Transverse colon (tissue), 4 donors: ENCODE measurements at regions of chr13 and their contacts with region 1.

Region 1: GRCh38 chr13:52001120-52001731 is 10.0 kb downstream of the ATP7B start:
- DNase-seq: no peak
- H3K4me3 ChIP-seq: no peak overlapping the region
- H3K27ac ChIP-seq: no peak overlapping the region
- H3K4me1 ChIP-seq: peaks cover 3 to 30% (median 16%) of the 10 kb centered on the region in 4 donors
- H3K27me3 ChIP-seq: no peaks in the 10 kb centered on the region
- CTCF ChIP-seq: peak; percentile 58 to 74 (median 70)
- EP300 ChIP-seq: no peak
- POLR2A ChIP-seq: no peak

Region 2: DNA sequence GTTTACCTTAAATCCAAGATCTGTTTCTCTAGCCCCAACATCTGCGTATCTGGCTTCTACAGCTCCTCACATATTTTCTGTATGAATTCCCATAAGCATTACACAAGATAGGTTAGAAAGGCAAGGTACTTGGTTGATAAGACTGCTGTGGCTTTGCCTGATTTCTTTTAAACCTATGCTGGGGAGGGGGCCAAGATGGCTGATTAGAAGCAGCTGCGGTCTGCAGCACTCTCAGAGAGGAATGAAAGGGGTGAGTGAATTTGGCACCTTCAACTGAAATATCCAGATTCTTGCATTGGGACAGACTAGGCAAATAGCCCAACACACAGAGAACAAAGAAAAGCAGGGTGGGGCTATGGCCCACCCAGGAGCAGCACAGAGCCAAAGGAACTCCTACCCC is 1145.5 kb before region 1 on chr13:
- in situ Hi-C with region 1: no loop called
- intact Hi-C with region 1: no loop called
- DNase-seq: no peak
- H3K4me3 ChIP-seq: no peak overlapping the region
- H3K27ac ChIP-seq: no peak overlapping the region
- H3K4me1 ChIP-seq: no peaks in the 10 kb centered on the region
- H3K27me3 ChIP-seq: no peaks in the 10 kb centered on the region
- CTCF ChIP-seq: no peak
- EP300 ChIP-seq: no peak
- POLR2A ChIP-seq: no peak

Region 3: DNA sequence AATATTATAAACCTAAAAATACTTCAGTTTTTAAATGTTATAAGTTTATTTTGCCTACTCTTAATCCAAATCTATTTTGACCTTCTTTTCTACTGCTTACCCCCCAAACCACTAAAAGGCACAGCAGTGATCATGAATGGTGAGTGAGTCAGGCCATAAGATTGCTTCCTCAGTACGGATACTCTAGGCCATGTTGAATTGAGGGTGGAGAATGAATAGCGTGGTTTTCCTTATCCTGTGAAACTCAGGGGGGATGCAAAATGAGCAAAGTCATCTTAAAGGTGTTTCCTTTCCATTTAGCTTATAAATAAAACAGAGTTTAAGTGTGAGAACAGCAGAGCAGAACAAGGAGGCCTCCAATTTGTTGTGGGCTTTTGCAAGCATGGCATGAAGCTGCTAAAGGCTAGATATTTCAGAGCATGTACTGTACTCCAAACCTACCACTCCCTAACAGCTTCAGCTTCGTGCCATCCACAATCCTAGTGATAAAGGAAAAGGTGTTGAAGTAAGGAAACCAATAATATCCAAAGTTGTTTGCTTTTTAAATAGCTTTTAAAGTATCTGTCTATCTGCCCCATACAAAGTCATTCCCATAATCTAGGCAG is 636.7 kb before region 1 on chr13:
- in situ Hi-C with region 1: no loop called
- intact Hi-C with region 1: no loop called
- DNase-seq: no peak
- H3K4me3 ChIP-seq: no peak overlapping the region
- H3K27ac ChIP-seq: no peak overlapping the region
- H3K4me1 ChIP-seq: no peaks in the 10 kb centered on the region
- H3K27me3 ChIP-seq: no peaks in the 10 kb centered on the region
- CTCF ChIP-seq: no peak
- EP300 ChIP-seq: no peak
- POLR2A ChIP-seq: no peak

Region 4: DNA sequence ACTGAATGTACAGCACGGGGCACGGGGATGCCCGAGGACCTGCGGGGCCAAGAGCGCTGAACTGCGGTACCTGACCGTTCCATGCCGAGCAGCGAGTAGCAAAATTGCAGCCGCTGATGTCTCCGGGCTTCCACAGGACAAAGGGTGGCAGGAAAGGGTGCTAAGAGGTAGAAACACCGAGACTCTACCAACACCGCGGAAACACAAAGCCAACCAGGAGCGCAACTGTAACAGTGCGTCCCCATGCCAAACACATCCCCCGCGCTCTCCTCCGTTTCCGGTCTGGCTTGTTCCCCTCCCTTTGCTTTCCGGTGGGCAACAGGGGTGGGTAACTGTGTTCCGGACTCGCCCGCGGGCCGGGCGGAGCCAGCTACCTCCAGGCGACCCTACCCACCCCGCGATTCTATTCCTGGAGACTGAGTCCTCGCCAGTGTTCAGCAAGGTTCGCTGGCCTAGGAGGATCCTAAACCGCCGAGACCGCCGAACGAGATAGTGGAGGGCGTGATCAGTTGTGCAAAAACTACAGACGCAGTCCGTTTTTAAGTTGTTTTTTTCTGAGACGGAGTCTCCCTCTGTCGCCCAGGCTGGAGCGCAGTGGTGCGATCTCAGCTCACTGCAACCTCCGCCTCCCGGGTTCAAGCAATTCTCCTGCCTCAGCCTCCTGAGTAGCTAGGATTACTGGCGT is 193.1 kb after region 1 on chr13:
- in situ Hi-C with region 1: loop called in 2 of 4 experiments (anchors 10 kb)
- intact Hi-C with region 1: no loop called
- DNase-seq: peak; percentile 90
- H3K4me3 ChIP-seq: peak overlapping the region; percentile 58 to 83 (median 73)
- H3K27ac ChIP-seq: peak overlapping the region; percentile 90 to 93 (median 92)
- H3K4me1 ChIP-seq: peaks cover 4 to 28% (median 17%) of the 10 kb centered on the region in 4 donors
- H3K27me3 ChIP-seq: no peaks in the 10 kb centered on the region
- CTCF ChIP-seq: peak in 1 of 5 experiments; percentile 18
- EP300 ChIP-seq: no peak
- POLR2A ChIP-seq: peak; percentile 74

Region 5: DNA sequence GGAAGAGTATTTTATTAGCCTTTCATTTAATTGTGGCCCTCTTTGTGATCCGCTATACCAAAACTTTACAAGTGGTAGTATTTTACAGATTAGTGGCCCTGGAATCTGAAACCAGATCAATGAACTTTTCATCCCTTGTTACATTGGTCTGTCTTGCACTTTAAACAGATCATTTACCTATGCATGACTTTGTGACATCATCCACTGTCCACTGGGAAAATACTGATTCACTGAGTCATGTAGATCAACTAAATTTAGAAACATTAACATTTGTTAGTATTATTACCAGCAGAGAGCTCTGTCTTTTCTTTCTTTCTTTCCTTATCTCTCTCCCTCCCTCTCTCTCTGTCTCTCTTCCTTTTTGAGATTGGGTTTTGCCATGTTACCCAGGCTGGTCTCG is 829.7 kb after region 1 on chr13:
- in situ Hi-C with region 1: no loop called
- intact Hi-C with region 1: no loop called
- DNase-seq: no peak
- H3K4me3 ChIP-seq: no peak overlapping the region
- H3K27ac ChIP-seq: no peak overlapping the region
- H3K4me1 ChIP-seq: no peaks in the 10 kb centered on the region
- H3K27me3 ChIP-seq: peaks cover 4% of the 10 kb centered on the region
- CTCF ChIP-seq: no peak
- EP300 ChIP-seq: no peak
- POLR2A ChIP-seq: no peak